Endothelial cell of umbilical vein (primary cell): ENCODE measurements at regions of chr18 and their contacts with region 1.

Region 1: GRCh38 chr18:32661486-32662299 is 111.1 kb downstream of the KLHL14 start:
- DNase-seq: no peak
- H3K4me3 ChIP-seq: no peak overlapping the region
- H3K27ac ChIP-seq: no peak overlapping the region
- H3K4me1 ChIP-seq: no peaks in the 10 kb centered on the region
- H3K27me3 ChIP-seq: no peaks in the 10 kb centered on the region
- CTCF ChIP-seq: no peak
- POLR2A ChIP-seq: no peak

Region 2: GRCh38 chr18:34543945-34544344 is 1882.3 kb after region 1 on chr18:
- CTCF ChIA-PET with region 1: no interaction called
- POLR2A ChIA-PET with region 1: no interaction called
- dilution Hi-C with region 1: no loop called
- intact Hi-C with region 1: loop called (anchors 10 kb)
- DNase-seq: no peak
- H3K4me3 ChIP-seq: no peak overlapping the region
- H3K27ac ChIP-seq: no peak overlapping the region
- H3K4me1 ChIP-seq: no peaks in the 10 kb centered on the region
- H3K27me3 ChIP-seq: no peaks in the 10 kb centered on the region
- CTCF ChIP-seq: no peak
- POLR2A ChIP-seq: no peak